ENCODE measurements at regions of chr19 and their contacts with region 1.

Region 1: DNA sequence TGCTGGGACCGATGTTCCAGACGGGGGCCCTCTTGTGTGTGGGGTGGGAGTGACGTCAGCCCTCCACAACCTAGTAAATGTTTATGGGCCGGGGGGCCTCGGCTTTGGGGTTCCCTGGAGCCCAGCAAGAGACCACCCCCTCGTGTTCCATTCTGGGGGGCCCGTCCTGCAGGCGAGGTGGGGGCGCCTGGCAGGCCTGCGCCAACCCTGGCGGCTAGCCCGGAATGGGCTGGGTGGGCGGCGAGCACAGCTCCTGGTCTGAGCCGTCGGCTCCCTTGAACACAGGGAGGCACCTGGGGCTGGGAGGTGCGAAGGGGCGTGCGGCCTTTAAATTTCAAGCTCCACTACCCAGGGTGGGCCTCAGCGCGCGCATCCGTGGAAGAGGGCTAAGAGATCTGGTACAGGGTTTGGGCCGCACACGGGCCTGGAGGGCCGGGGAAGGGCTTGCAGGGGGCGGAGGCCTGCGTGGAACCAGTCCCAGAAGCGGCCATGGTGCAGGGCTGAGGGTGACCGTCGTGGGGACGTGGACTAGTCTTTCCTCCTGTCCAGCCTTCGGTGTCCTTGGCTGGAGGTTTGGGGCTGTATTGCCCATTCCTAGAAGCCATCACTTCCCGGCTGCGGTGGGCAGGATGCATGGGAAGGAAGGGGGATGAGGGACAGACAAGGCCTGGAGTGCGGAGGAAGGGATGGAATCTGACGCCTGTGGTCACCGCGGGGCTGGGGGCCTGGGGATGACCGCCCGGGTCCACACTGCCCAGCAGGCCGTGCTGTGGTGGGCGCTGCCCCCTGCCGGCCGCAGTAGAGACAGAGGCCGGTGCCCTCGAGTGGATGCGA is 11.4 kb downstream of the NDUFA11 start:
- H3K4me3 ChIP-seq: no peak overlapping the region
- H3K27ac ChIP-seq: no peak overlapping the region
- H3K4me1 ChIP-seq: no peaks in the 10 kb centered on the region; the same call in 1 of the 2 replicates
- CTCF ChIP-seq: peak; percentile 91

Region 2: GRCh38 chr19:5827891-5828660 is 64.1 kb before region 1 on chr19:
- CTCF ChIA-PET with region 1: interaction called, 3 read pairs
- POLR2A ChIA-PET with region 1: interaction called, 10 read pairs
- H3K4me3 ChIP-seq: peak overlapping the region; percentile 34
- H3K27ac ChIP-seq: peak overlapping the region; percentile 59; the same call in 1 of the 2 replicates
- H3K4me1 ChIP-seq: peaks cover 6% of the 10 kb centered on the region
- CTCF ChIP-seq: no peak

Region 3: GRCh38 chr19:6003976-6004375 is 111.8 kb after region 1 on chr19:
- CTCF ChIA-PET with region 1: no interaction called
- POLR2A ChIA-PET with region 1: no interaction called
- H3K4me3 ChIP-seq: no peak overlapping the region
- H3K27ac ChIP-seq: no peak overlapping the region
- H3K4me1 ChIP-seq: no peaks in the 10 kb centered on the region
- CTCF ChIP-seq: no peak

Region 4: GRCh38 chr19:6014551-6015135 is 122.5 kb after region 1 on chr19:
- CTCF ChIA-PET with region 1: no interaction called
- POLR2A ChIA-PET with region 1: no interaction called
- H3K4me3 ChIP-seq: no peak overlapping the region
- H3K27ac ChIP-seq: no peak overlapping the region
- H3K4me1 ChIP-seq: no peaks in the 10 kb centered on the region
- CTCF ChIP-seq: no peak

Measured in HEK293 (cell line).